Vagina (tissue), 2 donors: ENCODE measurements at regions of chr22 and their contacts with region 1.

Region 1: GRCh38 chr22:45268958-45269844 is 15.5 kb upstream of the UPK3A start:
- DNase-seq: no peak
- H3K4me3 ChIP-seq: peak overlapping the region; percentile 64 to 66
- H3K27ac ChIP-seq: peak overlapping the region; percentile 76
- H3K4me1 ChIP-seq: peaks cover 24% of the 10 kb centered on the region
- H3K27me3 ChIP-seq: no peaks in the 10 kb centered on the region
- CTCF ChIP-seq: peak; percentile 83 to 95 (median 92)
- POLR2A ChIP-seq: no peak

Region 2: DNA sequence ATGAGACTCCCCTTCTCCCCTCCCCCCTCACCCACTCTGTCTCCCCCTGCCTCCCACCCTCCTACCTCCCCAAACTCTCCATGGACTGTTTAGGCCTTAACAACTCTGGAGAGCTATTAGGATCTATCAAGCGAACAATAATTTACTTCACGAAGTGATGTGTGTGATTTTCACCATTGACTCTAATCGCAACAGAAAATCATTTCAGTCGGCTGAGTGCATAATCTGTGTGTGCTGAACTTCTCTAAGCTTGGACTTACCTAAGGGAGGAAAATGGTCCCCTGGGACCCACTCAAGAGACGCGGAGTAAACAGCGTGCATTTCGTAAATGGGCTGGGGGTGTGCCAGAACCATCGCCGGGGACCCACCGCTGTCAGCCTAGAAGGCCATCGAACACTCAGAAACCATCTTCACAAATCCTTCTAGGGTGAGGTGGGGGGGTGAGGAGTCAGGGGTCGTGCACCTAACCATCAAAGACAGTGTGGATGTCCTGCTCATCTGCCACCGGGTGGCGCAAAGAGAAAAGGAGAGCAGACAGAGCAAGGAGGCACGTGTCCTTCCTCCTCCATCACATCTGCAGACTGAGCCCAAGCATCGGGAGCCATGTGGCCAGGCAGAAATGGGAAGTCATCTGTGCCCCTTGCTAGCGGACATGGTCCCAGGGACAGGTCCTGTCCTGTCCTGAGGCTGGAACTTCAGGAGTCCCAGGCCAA is 167.5 kb before region 1 on chr22:
- intact Hi-C with region 1: no loop called
- DNase-seq: no peak
- H3K4me3 ChIP-seq: no peak overlapping the region
- H3K27ac ChIP-seq: no peak overlapping the region
- H3K4me1 ChIP-seq: no peaks in the 10 kb centered on the region
- H3K27me3 ChIP-seq: no peaks in the 10 kb centered on the region
- CTCF ChIP-seq: peak in 1 of 3 experiments; percentile 70
- POLR2A ChIP-seq: no peak

Region 3: DNA sequence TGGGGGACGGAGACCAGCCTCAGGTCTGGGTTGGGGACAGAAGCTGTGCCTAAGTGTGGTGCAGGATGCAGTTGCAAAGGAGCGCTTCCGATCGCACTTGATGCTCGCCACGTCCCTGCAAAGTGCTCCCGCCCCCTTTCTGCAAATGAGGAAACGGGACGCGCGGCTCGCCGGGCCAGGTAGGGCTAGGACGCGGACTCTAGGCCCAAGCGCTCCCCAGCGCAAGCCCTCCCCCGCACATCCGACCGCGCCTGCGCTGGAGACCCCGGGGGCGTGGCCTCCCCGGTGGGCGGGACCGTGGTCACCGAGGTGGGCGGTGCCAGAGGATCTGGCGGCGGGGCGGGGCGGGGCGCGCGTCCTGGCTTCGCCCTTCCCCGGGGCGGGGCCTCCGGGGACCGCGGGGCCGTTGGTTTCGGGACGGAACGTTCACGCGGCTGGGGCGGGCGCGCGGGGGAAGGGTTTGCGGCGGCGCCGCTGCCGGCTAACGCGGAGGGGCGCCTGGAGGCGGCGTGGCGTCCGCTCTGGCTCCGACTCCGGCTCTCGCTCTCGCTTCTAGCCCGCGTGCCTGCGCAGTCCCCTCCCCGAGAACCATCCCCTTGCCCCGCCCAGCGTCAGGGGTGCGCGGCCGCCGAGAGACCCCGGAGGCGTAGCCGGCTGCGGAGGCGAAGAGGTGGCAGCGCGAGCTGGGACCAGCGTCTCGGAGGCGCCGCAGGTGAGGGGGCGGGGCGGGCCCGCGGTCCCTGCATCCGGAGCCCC is 40.4 kb after region 1 on chr22 and contains the start of gene FAM118A:
- intact Hi-C with region 1: loop called (anchors 2 kb)
- DNase-seq: no peak
- H3K4me3 ChIP-seq: peak within 1 kb of the TSS; percentile 95 to 98
- H3K27ac ChIP-seq: peak within 1 kb of the TSS; percentile 92
- H3K4me1 ChIP-seq: peaks cover 20% of the 10 kb centered on the region
- H3K27me3 ChIP-seq: no peaks in the 10 kb centered on the region
- CTCF ChIP-seq: peak in 1 of 3 experiments; percentile 19
- POLR2A ChIP-seq: peak in 1 of 2 donors; percentile 63
- total RNA-seq, gene FAM118A: 49.6 TPM

Region 4: DNA sequence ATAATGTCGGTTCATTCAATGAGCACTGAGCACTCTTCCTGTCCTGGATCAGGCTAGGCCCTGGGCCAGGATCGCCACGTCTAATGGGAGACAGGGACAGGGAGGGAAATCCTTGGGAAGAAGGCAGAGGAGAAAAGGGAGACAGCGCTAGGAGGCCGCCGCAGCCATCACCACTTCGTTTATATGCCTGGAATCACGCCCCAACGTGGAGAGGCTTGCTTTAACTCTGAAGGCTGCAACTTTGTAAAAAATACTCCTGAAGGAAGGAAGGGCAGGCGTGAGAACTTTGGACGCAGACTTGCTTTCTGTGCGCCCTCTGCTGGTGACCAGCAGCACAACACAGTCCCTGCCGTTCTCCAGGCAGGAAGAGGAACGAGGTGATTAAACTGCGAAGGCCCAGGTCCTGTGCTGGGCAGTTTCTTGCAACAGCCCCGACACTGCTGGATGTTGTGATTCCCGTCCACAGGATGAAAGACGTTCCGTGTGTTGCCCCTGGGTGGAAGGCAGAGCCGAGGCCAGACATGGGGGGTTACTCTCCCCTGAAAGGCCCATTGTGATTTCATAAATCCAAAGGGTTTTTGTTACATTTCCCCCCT is 166.4 kb after region 1 on chr22:
- intact Hi-C with region 1: loop called (anchors 2 kb)
- DNase-seq: no peak
- H3K4me3 ChIP-seq: no peak overlapping the region
- H3K27ac ChIP-seq: peak overlapping the region; percentile 71
- H3K4me1 ChIP-seq: peaks cover 12% of the 10 kb centered on the region
- H3K27me3 ChIP-seq: no peaks in the 10 kb centered on the region
- CTCF ChIP-seq: peak; percentile 91 to 95 (median 93)
- POLR2A ChIP-seq: no peak